HepG2 (cell line): ENCODE measurements at regions of chr10 and their contacts with region 1.

Region 1: GRCh38 chr10:50990568-50991185 is 83.6 kb upstream of the PRKG1 start:
- DNase-seq: no peak
- ATAC-seq: no peak
- H3K4me3 ChIP-seq: peak overlapping the region in 2 of 3 experiments; percentile 49 to 70; a peak in 3 of 6 replicates
- H3K27ac ChIP-seq: no peak overlapping the region
- H3K4me1 ChIP-seq: 0 out of 2 replicates have a peak, but pooled peaks cover 8% of the 10 kb centered on the region
- H3K27me3 ChIP-seq: peaks cover 6 to 42% of the 10 kb centered on the region in 2 experiments
- CTCF ChIP-seq: no peak
- EP300 ChIP-seq: no peak
- POLR2A ChIP-seq: no peak
- RAD21 ChIP-seq: no peak

Region 2: DNA sequence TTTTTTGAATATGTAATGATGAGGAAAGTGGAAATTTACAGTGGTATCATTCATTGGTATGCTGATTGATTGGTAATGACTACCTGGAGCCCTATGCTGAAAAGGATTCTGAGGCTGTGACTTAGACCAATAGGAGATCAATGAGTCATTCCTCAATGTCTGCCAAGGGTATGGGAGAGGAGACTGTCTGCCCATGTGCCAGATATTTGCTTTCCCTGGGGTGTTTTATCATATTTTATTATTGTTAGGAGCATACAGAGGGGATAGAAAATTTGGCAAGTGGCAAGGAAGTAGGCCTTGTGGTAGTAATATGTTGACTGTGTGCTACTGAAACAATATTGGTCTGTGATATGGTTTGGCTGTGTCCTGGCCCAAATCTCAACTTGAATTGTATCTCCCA is 196.2 kb before region 1 on chr10:
- CTCF ChIA-PET with region 1: no interaction called
- POLR2A ChIA-PET with region 1: no interaction called
- in situ Hi-C with region 1: loop called (anchors 10 kb)
- intact Hi-C with region 1: loop called (anchors 10 kb)
- DNase-seq: no peak
- ATAC-seq: no peak
- H3K4me3 ChIP-seq: no peak overlapping the region
- H3K27ac ChIP-seq: no peak overlapping the region
- H3K4me1 ChIP-seq: peaks cover 11% of the 10 kb centered on the region
- H3K27me3 ChIP-seq: no peaks in the 10 kb centered on the region
- CTCF ChIP-seq: no peak
- EP300 ChIP-seq: no peak
- POLR2A ChIP-seq: no peak
- RAD21 ChIP-seq: no peak

Region 3: GRCh38 chr10:50946991-50947781 is 43.5 kb before region 1 on chr10:
- CTCF ChIA-PET with region 1: no interaction called
- POLR2A ChIA-PET with region 1: no interaction called
- in situ Hi-C with region 1: no loop called
- intact Hi-C with region 1: no loop called
- DNase-seq: no peak
- ATAC-seq: no peak
- H3K4me3 ChIP-seq: no peak overlapping the region
- H3K27ac ChIP-seq: no peak overlapping the region
- H3K4me1 ChIP-seq: no peaks in the 10 kb centered on the region
- H3K27me3 ChIP-seq: no peaks in the 10 kb centered on the region
- CTCF ChIP-seq: no peak
- EP300 ChIP-seq: no peak
- POLR2A ChIP-seq: no peak
- RAD21 ChIP-seq: no peak